ENCODE measurements at regions of chr10 and their contacts with region 1.

Region 1: DNA sequence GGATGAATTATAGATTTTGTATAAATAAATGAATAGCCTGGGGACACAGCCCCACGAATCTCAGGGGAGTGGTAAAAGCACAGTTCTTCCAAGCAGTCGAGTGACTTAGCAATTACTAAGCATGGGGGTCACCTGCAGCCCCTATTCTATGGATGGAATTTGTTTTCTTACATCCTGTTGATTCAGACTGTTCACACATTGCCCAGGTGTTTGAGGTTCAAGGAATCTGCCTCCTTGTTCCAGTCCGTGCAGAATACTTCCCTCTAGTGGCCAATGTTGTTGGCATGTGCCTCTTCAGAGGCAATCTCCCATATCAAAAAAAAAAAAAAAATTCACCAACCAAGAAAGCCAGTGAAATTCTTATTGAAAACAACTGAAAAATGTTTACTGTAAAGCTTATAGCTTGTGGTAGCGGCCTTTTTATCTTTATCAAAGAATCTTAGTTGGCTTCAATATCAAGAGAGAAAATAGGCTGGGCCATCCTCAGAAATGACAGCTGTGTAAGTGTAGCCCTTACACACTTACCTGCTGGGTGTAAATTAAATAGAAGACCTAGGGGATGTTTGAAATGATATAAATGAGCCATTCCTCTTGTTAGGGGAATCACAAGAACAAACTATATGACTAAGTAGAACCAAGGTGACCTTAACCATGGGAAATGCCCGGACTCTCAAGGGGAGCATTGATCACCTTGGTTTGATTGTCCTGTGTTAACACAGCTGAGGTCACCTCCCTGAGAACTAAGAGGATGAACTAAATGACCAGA is 7.8 kb downstream of the LIPM start:
- DNase-seq: peak; percentile 80
- H3K4me3 Mint-ChIP-seq: no peak overlapping the region
- H3K27ac Mint-ChIP-seq: no peak overlapping the region
- H3K4me1 Mint-ChIP-seq: peaks cover 18% of the 10 kb centered on the region
- H3K27me3 Mint-ChIP-seq: peaks cover 27% of the 10 kb centered on the region

Region 2: GRCh38 chr10:88565072-88565471 is 245.3 kb before region 1 on chr10:
- intact Hi-C with region 1: loop called (anchors 10 kb)
- DNase-seq: no peak
- H3K4me3 Mint-ChIP-seq: no peak overlapping the region
- H3K27ac Mint-ChIP-seq: no peak overlapping the region
- H3K4me1 Mint-ChIP-seq: peaks cover 2% of the 10 kb centered on the region
- H3K27me3 Mint-ChIP-seq: peaks cover 23% of the 10 kb centered on the region

Region 3: DNA sequence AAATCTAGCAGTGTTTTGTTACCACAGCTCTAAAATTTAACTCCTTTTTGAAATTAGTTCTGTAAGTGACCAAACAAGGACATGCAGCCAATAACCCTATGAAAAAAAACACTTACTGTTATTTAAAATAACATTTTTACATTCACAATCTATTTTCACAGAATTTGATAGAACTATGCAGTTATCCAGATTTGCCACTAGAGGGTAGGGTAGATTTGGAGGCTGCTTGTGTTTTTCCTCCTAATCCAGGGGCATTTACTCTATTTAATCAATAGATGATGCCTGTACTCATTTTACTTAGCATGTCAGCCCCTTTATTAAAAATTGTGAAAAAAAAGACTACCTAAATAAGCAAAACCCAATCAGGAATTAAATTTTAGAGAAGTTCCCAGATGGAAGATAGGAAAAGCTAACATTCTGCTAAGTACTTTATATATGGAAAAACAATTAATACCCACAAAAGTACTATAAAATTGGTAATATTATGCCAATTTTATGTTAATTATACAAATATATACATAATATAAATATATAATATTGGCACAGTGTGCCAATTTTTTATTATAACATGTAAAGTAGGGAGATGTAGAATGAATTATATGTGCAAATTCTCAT is 122.4 kb before region 1 on chr10:
- intact Hi-C with region 1: loop called (anchors 1 kb)
- DNase-seq: no peak
- H3K4me3 Mint-ChIP-seq: no peak overlapping the region
- H3K27ac Mint-ChIP-seq: no peak overlapping the region
- H3K4me1 Mint-ChIP-seq: no peaks in the 10 kb centered on the region
- H3K27me3 Mint-ChIP-seq: peaks cover 27% of the 10 kb centered on the region

Region 4: DNA sequence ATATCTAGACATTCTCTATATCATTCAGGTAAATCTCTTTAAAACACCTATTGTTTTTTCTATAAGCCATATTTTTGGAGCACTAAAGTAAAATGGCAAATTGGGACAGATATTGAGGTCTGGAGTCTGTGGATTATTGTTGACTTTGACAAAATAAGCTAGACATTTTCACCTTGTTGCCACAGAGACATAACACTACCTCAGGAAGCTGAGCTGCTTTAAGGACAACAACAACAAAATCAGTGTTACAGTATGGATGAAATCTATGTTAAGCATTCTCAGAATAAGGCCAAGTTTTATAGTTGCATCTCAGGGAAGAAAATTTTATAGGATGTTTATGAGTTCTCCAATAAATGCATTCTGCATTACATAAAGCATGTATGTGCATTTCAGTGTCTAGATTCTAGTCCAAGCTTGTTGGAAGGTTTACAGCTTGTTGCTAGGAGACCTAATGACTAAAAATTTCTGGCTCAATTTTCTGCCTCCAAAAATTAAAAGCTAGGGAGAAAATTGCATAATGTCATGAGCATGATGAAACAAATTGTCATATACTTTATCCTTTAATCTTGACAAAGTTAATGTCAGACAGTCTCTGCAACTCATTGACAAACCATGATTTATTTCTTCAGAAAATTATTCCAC is 10.5 kb after region 1 on chr10:
- intact Hi-C with region 1: loop called (anchors 1 kb)
- DNase-seq: no peak
- H3K4me3 Mint-ChIP-seq: no peak overlapping the region
- H3K27ac Mint-ChIP-seq: no peak overlapping the region
- H3K4me1 Mint-ChIP-seq: peaks cover 19% of the 10 kb centered on the region
- H3K27me3 Mint-ChIP-seq: peaks cover 10% of the 10 kb centered on the region

Region 5: GRCh38 chr10:88831709-88832108 is 21.3 kb after region 1 on chr10:
- intact Hi-C with region 1: no loop called
- DNase-seq: peak; percentile 76
- H3K4me3 Mint-ChIP-seq: no peak overlapping the region
- H3K27ac Mint-ChIP-seq: no peak overlapping the region
- H3K4me1 Mint-ChIP-seq: peaks cover 51% of the 10 kb centered on the region
- H3K27me3 Mint-ChIP-seq: no peaks in the 10 kb centered on the region